Activated T-helper 2 cell treated with anti-CD3 and anti-CD28 coated beads, Interferon-gamma antibody, Interleukin-2, Interleukin-4, amounts not matched to agents 10 μg/mL and 5 μg/mL and 100 μg/mL, durations not matched to agents 14 hours and 24 hours and 36 hours (primary cell): ENCODE measurements at regions of chr5 and their contacts with region 1.

Region 1: GRCh38 chr5:181181650-181182565 is 23.1 kb downstream of the TRIM7 start:
- DNase-seq: no peak
- H3K4me3 Mint-ChIP-seq: no peak overlapping the region
- H3K27ac Mint-ChIP-seq: no peak overlapping the region
- H3K4me1 Mint-ChIP-seq: peaks cover 12% of the 10 kb centered on the region
- H3K27me3 Mint-ChIP-seq: peaks cover 6% of the 10 kb centered on the region

Region 2: DNA sequence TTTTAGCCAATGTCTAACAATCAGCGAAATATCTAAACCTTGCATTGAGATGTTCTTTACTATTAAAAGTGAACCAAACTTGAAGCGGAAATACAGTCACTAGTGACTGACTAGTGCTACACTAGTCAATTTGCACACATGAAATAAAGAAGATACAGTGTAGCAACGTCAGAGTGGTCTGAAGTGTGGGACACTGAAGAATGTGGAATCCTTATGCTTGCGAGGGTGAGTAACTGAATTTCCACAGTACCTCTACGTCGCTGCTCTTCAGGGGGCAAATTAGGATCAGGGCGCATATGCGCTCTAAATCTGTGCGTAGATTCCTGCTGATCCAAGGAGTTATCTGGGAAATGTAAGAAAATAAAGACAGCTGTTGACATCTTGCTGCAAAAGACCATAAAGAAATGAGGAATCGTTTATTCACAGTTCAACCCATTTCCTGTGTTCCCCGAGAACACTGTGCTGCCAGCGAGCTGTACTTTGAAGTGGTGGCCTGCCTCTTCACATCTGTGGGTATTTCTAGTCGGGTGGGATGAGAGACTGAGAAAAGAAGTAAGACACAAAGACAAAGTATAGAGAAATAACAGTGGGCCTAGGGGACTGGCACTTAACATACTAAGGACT is 492.7 kb before region 1 on chr5:
- intact Hi-C with region 1: no loop called
- DNase-seq: no peak
- H3K4me3 Mint-ChIP-seq: peak overlapping the region; percentile 20
- H3K27ac Mint-ChIP-seq: peak overlapping the region; percentile 2
- H3K4me1 Mint-ChIP-seq: peaks cover 25% of the 10 kb centered on the region
- H3K27me3 Mint-ChIP-seq: peaks cover 13% of the 10 kb centered on the region

Region 3: DNA sequence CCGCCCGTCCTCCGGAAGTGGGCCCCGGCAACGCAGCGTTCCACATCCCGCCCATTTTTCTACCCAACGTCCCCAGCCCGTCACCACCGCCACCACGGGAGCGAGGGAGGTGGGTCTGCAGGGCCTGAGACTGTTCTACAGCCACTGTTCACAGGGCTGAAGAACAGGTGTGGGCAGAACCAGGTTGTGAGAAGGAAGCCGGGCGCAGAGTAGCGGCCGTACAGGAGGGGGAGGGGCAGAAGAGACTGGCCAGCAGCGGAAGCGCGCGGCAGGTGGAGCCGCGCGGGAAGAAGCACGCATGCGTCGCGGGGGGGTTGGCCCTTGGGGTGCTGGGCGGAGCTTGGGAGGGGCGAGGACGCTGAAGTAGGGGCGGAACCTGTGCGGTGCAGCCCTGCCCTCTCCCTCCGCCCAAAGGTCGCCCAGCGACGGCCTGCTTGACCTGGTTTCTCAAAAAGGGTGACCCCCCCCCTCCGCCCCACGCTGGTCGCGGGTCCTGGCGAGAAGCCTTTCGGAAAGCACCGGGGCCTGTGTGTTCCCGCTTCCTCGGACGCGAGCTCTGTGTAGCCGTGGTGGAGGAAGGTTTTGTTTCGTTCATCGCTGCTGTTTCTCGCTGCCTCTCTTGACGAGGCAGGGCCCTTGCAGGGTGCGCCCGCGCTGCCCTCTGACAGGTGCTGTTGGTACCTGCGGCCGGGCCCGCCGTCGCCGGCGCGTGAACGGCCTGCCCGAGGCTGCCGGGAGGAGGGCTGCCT is 371.5 kb before region 1 on chr5:
- intact Hi-C with region 1: no loop called
- DNase-seq: peak; percentile 92
- H3K4me3 Mint-ChIP-seq: peak overlapping the region; percentile 79
- H3K27ac Mint-ChIP-seq: peak overlapping the region; percentile 99
- H3K4me1 Mint-ChIP-seq: peaks cover 69% of the 10 kb centered on the region
- H3K27me3 Mint-ChIP-seq: no peaks in the 10 kb centered on the region

Region 4: DNA sequence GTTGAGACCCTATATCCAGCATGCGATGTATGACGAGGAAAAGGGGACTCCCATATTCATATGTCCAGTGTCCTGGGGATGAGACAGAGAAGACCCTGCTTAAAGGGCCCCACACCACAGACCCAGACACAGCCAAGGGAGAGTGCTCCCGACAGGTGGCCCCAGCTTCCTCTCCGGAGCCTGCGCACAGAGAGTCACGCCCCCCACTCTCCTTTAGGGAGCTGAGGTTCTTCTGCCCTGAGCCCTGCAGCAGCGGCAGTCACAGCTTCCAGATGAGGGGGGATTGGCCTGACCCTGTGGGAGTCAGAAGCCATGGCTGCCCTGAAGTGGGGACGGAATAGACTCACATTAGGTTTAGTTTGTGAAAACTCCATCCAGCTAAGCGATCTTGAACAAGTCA is 176.1 kb before region 1 on chr5:
- intact Hi-C with region 1: no loop called
- DNase-seq: no peak
- H3K4me3 Mint-ChIP-seq: no peak overlapping the region
- H3K27ac Mint-ChIP-seq: no peak overlapping the region
- H3K4me1 Mint-ChIP-seq: no peaks in the 10 kb centered on the region
- H3K27me3 Mint-ChIP-seq: peaks cover 2% of the 10 kb centered on the region

Region 5: DNA sequence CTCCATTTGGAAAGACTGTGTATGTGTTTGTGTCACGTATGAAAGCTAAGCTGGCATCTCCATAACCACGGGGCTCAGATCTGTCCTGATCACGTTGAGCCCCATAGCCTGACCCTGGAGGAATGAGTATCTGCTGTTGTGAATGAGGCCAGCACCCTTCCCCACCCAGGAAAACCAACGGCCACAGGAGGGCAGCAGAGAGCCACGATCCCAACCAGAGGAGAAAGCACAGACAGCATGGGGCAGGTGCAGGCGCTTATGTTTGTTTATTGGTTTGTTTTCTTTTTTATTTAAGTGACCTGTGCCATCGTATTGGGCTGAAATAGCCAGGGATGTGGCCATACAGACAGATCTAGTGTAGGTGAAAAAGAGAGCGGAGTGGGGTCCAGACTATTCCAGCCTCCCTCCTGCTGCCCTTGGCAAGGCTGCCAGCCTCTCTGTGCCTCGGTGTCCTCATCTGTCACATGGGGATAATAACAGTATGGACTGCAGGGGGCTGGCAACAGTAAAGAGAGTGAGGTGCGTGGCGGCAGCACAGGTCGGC is 22.6 kb before region 1 on chr5:
- intact Hi-C with region 1: loop called (anchors 1 kb)
- DNase-seq: peak; percentile 83
- H3K4me3 Mint-ChIP-seq: peak overlapping the region; percentile 67
- H3K27ac Mint-ChIP-seq: peak overlapping the region; percentile 90
- H3K4me1 Mint-ChIP-seq: peaks cover 30% of the 10 kb centered on the region
- H3K27me3 Mint-ChIP-seq: peaks cover 7% of the 10 kb centered on the region